Natural killer cell (primary cell): ENCODE measurements at regions of chr20 and their contacts with region 1.

Region 1: DNA sequence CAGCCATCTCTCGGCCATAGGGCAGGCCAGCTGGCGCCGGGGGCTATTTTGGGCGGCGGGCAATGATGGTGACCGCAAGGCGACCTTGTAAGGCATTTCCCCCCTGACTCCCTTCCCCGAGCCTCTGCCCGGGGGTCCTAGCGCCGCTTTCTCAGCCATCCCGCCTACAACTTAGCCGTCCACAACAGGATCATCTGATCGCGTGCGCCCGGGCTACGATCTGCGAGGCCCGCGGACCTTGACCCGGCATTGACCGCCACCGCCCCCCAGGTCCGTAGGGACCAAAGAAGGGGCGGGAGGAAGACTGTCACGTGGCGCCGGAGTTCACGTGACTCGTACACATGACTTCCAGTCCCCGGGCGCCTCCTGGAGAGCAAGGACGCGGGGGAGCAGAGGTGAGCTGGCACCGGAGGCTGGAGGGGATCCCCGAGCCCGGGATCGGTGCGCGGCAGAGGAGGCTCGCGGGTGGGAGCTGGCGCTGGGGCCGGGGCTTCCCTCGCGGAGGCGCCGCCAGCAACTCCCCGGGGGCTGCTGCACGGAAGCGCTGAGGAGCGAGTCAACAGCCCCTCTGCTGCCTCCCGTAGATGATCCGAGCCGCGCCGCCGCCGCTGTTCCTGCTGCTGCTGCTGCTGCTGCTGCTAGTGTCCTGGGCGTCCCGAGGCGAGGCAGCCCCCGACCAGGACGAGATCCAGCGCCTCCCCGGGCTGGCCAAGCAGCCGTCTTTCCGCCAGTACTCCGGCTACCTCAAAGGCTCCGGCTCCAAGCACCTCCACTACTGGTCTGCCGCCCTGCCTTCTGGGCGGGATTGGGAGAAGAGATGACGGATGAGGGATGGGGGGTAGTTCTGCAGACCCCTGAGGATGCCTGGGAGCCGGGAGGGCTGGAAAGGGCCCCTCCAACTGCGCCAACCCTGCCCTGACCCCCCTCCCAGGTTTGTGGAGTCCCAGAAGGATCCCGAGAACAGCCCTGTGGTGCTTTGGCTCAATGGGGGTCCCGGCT is at the starts of genes CTSA and NEURL2:
- DNase-seq: peak; percentile 78 to 90
- ATAC-seq: peak; percentile 73 to 87 (median 86)
- H3K4me3 ChIP-seq: peak within 1 kb of the TSS; percentile 68
- H3K4me3 Mint-ChIP-seq: peak within 1 kb of the TSS; percentile 93
- H3K27ac ChIP-seq: peak within 1 kb of the TSS; percentile 32
- H3K27ac Mint-ChIP-seq: peak within 1 kb of the TSS; percentile 58 to 88
- H3K4me1 ChIP-seq: peaks cover 38% of the 10 kb centered on the region
- H3K4me1 Mint-ChIP-seq: peaks cover 5 to 24% of the 10 kb centered on the region in 2 donors
- H3K27me3 ChIP-seq: no peaks in the 10 kb centered on the region
- H3K27me3 Mint-ChIP-seq: no peaks in the 10 kb centered on the region
- CTCF ChIP-seq: no peak
- total RNA-seq, gene CTSA: 72.8 to 108 (median 86.8) TPM
- total RNA-seq, gene NEURL2: 0.89 to 1.4 (median 1.4) TPM

Region 2: GRCh38 chr20:45842169-45842812 is 49.0 kb before region 1 on chr20:
- intact Hi-C with region 1: no loop called
- DNase-seq: no peak
- ATAC-seq: peak; percentile 76 to 97 (median 91)
- H3K4me3 ChIP-seq: no peak overlapping the region
- H3K4me3 Mint-ChIP-seq: no peak overlapping the region
- H3K27ac ChIP-seq: peak overlapping the region; percentile 49
- H3K27ac Mint-ChIP-seq: peak overlapping the region; percentile 61 to 70
- H3K4me1 ChIP-seq: peaks cover 11% of the 10 kb centered on the region
- H3K4me1 Mint-ChIP-seq: peaks cover 11 to 18% of the 10 kb centered on the region in 2 donors
- H3K27me3 ChIP-seq: no peaks in the 10 kb centered on the region
- H3K27me3 Mint-ChIP-seq: no peaks in the 10 kb centered on the region
- CTCF ChIP-seq: no peak

Region 3: GRCh38 chr20:45910670-45911485 is 19.6 kb after region 1 on chr20:
- intact Hi-C with region 1: loop called (anchors 2 kb)
- DNase-seq: peak; percentile 89 to 96
- ATAC-seq: peak; percentile 93 to 97 (median 94)
- H3K4me3 ChIP-seq: peak overlapping the region; percentile 41
- H3K4me3 Mint-ChIP-seq: peak overlapping the region; percentile 75
- H3K27ac ChIP-seq: peak overlapping the region; percentile 26
- H3K27ac Mint-ChIP-seq: peak overlapping the region; percentile 73 to 88
- H3K4me1 ChIP-seq: peaks cover 23% of the 10 kb centered on the region
- H3K4me1 Mint-ChIP-seq: peaks cover 9 to 16% of the 10 kb centered on the region in 2 donors
- H3K27me3 ChIP-seq: peaks cover 10% of the 10 kb centered on the region
- H3K27me3 Mint-ChIP-seq: peaks cover 3% of the 10 kb centered on the region in 2 donors
- CTCF ChIP-seq: no peak

Region 4: DNA sequence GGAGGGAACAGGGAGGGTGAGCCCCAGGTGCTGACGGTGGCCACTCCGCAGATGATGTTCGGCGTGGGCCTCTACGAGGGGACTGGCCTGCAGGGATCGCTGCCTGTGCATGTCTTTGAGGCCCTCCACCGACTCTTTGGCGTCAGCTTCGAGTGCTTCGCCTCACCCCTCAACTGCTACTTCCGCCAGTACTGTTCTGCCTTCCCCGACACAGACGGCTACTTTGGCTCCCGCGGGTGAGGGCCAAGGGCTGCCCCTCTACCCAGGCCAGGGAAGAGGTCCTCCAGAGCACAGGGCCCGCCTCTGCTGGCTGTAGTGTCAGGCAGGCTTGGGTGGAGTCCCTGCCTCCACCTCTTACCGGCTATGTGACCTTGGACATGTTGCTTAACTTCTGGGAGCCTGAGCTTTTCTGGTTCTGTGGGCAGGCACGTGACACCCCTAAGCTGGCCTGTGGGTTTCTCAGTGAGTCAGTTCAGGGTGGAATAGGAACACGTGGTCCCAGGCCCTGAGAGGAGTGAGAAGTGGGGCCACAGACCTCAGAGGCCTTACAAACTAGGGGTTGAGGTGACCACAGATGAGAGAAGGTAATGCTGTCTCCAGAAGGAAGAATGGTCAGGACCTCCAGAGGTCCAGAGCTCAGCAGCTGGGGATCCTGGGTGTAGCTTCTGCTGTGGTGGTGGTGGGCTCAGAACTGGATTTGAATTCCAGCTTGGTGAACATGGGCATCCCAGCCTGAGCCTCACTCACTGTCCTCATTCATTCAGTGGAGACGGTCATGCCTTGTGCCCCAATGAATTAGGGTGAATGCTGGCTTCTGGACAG is 55.1 kb after region 1 on chr20:
- intact Hi-C with region 1: loop called (anchors 1 kb)
- DNase-seq: peak; percentile 74 to 85
- ATAC-seq: peak; percentile 65 to 78 (median 75)
- H3K4me3 ChIP-seq: no peak overlapping the region
- H3K4me3 Mint-ChIP-seq: peak overlapping the region; percentile 72
- H3K27ac ChIP-seq: peak overlapping the region; percentile 87
- H3K27ac Mint-ChIP-seq: peak overlapping the region; percentile 90 to 97
- H3K4me1 ChIP-seq: peaks cover 47% of the 10 kb centered on the region
- H3K4me1 Mint-ChIP-seq: peaks cover 36 to 62% of the 10 kb centered on the region in 2 donors
- H3K27me3 ChIP-seq: no peaks in the 10 kb centered on the region
- H3K27me3 Mint-ChIP-seq: no peaks in the 10 kb centered on the region
- CTCF ChIP-seq: no peak

Region 5: DNA sequence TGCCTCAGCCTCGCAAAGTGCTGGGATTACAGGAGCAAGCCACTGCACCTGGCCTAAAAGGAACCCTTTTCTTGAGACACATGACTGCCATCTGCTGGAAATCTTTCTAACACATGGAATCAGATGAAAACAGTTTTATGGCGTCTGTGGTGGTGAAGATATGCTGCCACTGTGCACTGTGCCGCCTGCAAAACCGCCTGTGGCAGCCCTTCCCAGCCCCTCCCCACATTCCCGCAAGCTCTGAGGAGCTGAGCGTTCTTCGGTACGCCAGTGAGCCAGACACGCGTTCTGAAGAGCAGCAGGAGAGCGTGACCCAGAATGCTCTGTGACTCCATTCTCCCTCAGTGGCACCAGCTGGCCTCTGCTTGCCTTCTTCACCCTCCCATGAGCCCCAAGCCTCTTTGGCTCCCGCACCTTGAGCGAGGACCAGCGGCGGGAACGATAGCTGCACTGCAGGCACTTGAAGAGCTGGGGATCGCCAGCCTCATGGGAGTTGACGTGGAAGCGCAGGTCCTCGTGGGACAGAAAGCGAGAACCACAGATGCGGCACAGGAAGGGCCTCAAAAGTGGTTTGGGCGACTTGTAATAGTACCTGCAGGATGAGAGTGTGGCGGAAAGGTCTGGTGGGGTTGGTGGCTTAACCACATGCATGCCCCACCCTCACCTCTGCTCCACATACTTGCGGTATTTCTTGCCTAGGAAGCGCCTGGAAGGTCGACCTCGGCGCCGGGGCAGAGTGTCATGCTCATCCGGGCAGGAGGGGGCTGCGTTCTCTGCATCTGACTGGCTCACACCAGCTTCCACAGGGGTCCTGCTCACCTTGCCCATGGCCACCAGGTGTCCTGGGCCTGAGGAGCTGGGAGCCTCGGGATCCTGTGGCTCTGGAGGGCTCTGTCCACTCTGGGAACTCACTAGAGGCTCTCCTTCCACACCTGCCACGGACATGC is 72.0 kb after region 1 on chr20:
- intact Hi-C with region 1: loop called (anchors 1 kb)
- DNase-seq: peak in 1 of 2 donors; percentile 70
- ATAC-seq: peak; percentile 40 to 81 (median 41)
- H3K4me3 ChIP-seq: no peak overlapping the region
- H3K4me3 Mint-ChIP-seq: no peak overlapping the region
- H3K27ac ChIP-seq: no peak overlapping the region
- H3K27ac Mint-ChIP-seq: peak overlapping the region in 1 of 2 donors; percentile 80
- H3K4me1 ChIP-seq: peaks cover 16% of the 10 kb centered on the region
- H3K4me1 Mint-ChIP-seq: peaks cover 0 to 6% of the 10 kb centered on the region in 2 donors
- H3K27me3 ChIP-seq: no peaks in the 10 kb centered on the region
- H3K27me3 Mint-ChIP-seq: no peaks in the 10 kb centered on the region
- CTCF ChIP-seq: peak; percentile 43

Region 6: GRCh38 chr20:46099491-46100287 is 208.4 kb after region 1 on chr20:
- intact Hi-C with region 1: no loop called
- DNase-seq: no peak
- ATAC-seq: peak in 1 of 3 donors; percentile 52
- H3K4me3 ChIP-seq: no peak overlapping the region
- H3K4me3 Mint-ChIP-seq: no peak overlapping the region
- H3K27ac ChIP-seq: no peak overlapping the region
- H3K27ac Mint-ChIP-seq: no peak overlapping the region
- H3K4me1 ChIP-seq: no peaks in the 10 kb centered on the region
- H3K4me1 Mint-ChIP-seq: no peaks in the 10 kb centered on the region
- H3K27me3 ChIP-seq: peaks cover 11% of the 10 kb centered on the region
- H3K27me3 Mint-ChIP-seq: peaks cover 38% of the 10 kb centered on the region in 2 donors
- CTCF ChIP-seq: no peak

Region 7: GRCh38 chr20:46174469-46175128 is 283.3 kb after region 1 on chr20:
- intact Hi-C with region 1: no loop called
- DNase-seq: peak; percentile 63 to 83
- ATAC-seq: peak; percentile 76 to 98 (median 93)
- H3K4me3 ChIP-seq: no peak overlapping the region
- H3K4me3 Mint-ChIP-seq: no peak overlapping the region
- H3K27ac ChIP-seq: no peak overlapping the region
- H3K27ac Mint-ChIP-seq: no peak overlapping the region
- H3K4me1 ChIP-seq: peaks cover 4% of the 10 kb centered on the region
- H3K4me1 Mint-ChIP-seq: peaks cover 0 to 7% of the 10 kb centered on the region in 2 donors
- H3K27me3 ChIP-seq: peaks cover 14% of the 10 kb centered on the region
- H3K27me3 Mint-ChIP-seq: peaks cover 43 to 66% of the 10 kb centered on the region in 2 donors
- CTCF ChIP-seq: peak; percentile 56